ENCODE measurements at regions of chr12 and their contacts with region 1.

Region 1: GRCh38 chr12:38384816-38385378 is 68.3 kb downstream of the ALG10B start:
- DNase-seq: peak; percentile 91 to 97
- H3K4me3 ChIP-seq: peak overlapping the region; percentile 44; the same call in 1 of the 2 replicates
- H3K27ac ChIP-seq: peak overlapping the region; percentile 98
- H3K4me1 ChIP-seq: peaks cover 37% of the 10 kb centered on the region
- H3K27me3 ChIP-seq: no peaks in the 10 kb centered on the region
- CTCF ChIP-seq: peak; percentile 87

Region 2: GRCh38 chr12:38138225-38139221 is 246.4 kb before region 1 on chr12:
- CTCF ChIA-PET with region 1: no interaction called
- POLR2A ChIA-PET with region 1: no interaction called
- intact Hi-C with region 1: loop called (anchors 5 kb)
- DNase-seq: peak; percentile 54 to 76
- H3K4me3 ChIP-seq: peak overlapping the region; percentile 57
- H3K27ac ChIP-seq: no peak overlapping the region
- H3K4me1 ChIP-seq: peaks cover 14% of the 10 kb centered on the region
- H3K27me3 ChIP-seq: no peaks in the 10 kb centered on the region
- CTCF ChIP-seq: peak; percentile 94

Region 3: GRCh38 chr12:38417101-38417500 is 32.2 kb after region 1 on chr12:
- CTCF ChIA-PET with region 1: no interaction called
- POLR2A ChIA-PET with region 1: no interaction called
- intact Hi-C with region 1: no loop called
- DNase-seq: peak; percentile 2 to 52
- H3K4me3 ChIP-seq: no peak overlapping the region
- H3K27ac ChIP-seq: no peak overlapping the region
- H3K4me1 ChIP-seq: peaks cover 11% of the 10 kb centered on the region
- H3K27me3 ChIP-seq: no peaks in the 10 kb centered on the region
- CTCF ChIP-seq: no peak

Region 4: GRCh38 chr12:38508246-38508645 is 123.3 kb after region 1 on chr12:
- CTCF ChIA-PET with region 1: no interaction called
- POLR2A ChIA-PET with region 1: no interaction called
- intact Hi-C with region 1: loop called (anchors 1 kb)
- DNase-seq: peak; percentile 50 to 72
- H3K4me3 ChIP-seq: no peak overlapping the region
- H3K27ac ChIP-seq: no peak overlapping the region
- H3K4me1 ChIP-seq: peaks cover 12% of the 10 kb centered on the region
- H3K27me3 ChIP-seq: no peaks in the 10 kb centered on the region
- CTCF ChIP-seq: no peak

Region 5: DNA sequence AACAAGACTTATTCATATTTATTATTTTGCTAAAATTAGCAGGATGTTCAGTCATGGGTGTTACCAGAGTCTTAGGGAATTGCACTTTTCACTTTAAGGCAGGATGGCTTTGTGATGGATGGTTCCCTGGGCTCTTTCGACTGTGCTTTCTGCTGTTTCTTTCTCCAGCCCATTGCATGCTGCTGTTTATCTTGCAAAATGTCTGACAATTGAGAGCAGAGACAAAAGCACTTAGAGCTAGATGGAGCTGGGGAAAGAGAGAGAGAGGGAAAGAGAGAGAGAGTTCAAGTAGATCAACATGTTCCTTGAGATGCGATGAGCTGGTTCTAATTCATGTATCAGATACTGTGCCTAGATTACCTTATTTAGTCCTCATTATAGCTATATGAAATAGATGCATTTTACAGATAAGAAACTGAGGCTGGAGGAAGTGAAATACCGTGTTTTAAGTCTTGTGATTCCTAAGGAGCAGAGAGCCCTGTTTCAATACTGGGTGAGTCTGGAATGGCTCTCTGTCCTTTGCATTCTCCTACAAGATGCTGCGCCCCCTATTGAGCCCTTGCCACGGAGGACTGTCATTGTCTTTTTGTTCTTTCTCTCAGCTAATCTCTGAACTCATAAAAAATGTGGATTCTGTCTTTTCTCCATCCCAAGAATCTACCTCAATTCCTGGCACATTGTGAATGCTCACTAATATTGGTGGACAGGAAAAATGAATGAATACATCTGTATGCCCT is 159.6 kb after region 1 on chr12:
- CTCF ChIA-PET with region 1: no interaction called
- POLR2A ChIA-PET with region 1: no interaction called
- intact Hi-C with region 1: loop called (anchors 10 kb)
- DNase-seq: no peak
- H3K4me3 ChIP-seq: no peak overlapping the region
- H3K27ac ChIP-seq: no peak overlapping the region
- H3K4me1 ChIP-seq: peaks cover 37% of the 10 kb centered on the region
- H3K27me3 ChIP-seq: no peaks in the 10 kb centered on the region
- CTCF ChIP-seq: no peak

Region 6: GRCh38 chr12:38638406-38638805 is 253.5 kb after region 1 on chr12:
- CTCF ChIA-PET with region 1: no interaction called
- POLR2A ChIA-PET with region 1: no interaction called
- intact Hi-C with region 1: loop called (anchors 10 kb)
- DNase-seq: peak in 1 of 2 experiments; percentile 64
- H3K4me3 ChIP-seq: no peak overlapping the region
- H3K27ac ChIP-seq: no peak overlapping the region
- H3K4me1 ChIP-seq: peaks cover 34% of the 10 kb centered on the region
- H3K27me3 ChIP-seq: no peaks in the 10 kb centered on the region
- CTCF ChIP-seq: no peak